Activated B cell treated with CpG ODN at 0.5 μM for 24 hours (primary cell): ENCODE measurements at regions of chr1 and their contacts with region 1.

Region 1: GRCh38 chr1:12658531-12659453 is 14.9 kb downstream of the AADACL4 start:
- DNase-seq: peak; percentile 26
- ATAC-seq: peak; percentile 52
- H3K4me3 Mint-ChIP-seq: no peak overlapping the region
- H3K27ac Mint-ChIP-seq: no peak overlapping the region
- H3K4me1 Mint-ChIP-seq: peaks cover 6% of the 10 kb centered on the region
- H3K27me3 Mint-ChIP-seq: peaks cover 20% of the 10 kb centered on the region
- CTCF ChIP-seq: no peak

Region 2: GRCh38 chr1:12314333-12314903 is 344.4 kb before region 1 on chr1:
- CTCF ChIA-PET with region 1: interaction called, 20 read pairs
- POLR2A ChIA-PET with region 1: no interaction called
- intact Hi-C with region 1: loop called (anchors 1 kb)
- DNase-seq: no peak
- ATAC-seq: no peak
- H3K4me3 Mint-ChIP-seq: no peak overlapping the region
- H3K27ac Mint-ChIP-seq: no peak overlapping the region
- H3K4me1 Mint-ChIP-seq: no peaks in the 10 kb centered on the region
- H3K27me3 Mint-ChIP-seq: no peaks in the 10 kb centered on the region
- CTCF ChIP-seq: no peak

Region 3: GRCh38 chr1:12596007-12596821 is 62.6 kb before region 1 on chr1:
- CTCF ChIA-PET with region 1: no interaction called
- POLR2A ChIA-PET with region 1: no interaction called
- intact Hi-C with region 1: no loop called
- DNase-seq: no peak
- ATAC-seq: peak; percentile 25
- H3K4me3 Mint-ChIP-seq: peak overlapping the region; percentile 49
- H3K27ac Mint-ChIP-seq: no peak overlapping the region
- H3K4me1 Mint-ChIP-seq: peaks cover 13% of the 10 kb centered on the region
- H3K27me3 Mint-ChIP-seq: peaks cover 21% of the 10 kb centered on the region
- CTCF ChIP-seq: no peak

Region 4: DNA sequence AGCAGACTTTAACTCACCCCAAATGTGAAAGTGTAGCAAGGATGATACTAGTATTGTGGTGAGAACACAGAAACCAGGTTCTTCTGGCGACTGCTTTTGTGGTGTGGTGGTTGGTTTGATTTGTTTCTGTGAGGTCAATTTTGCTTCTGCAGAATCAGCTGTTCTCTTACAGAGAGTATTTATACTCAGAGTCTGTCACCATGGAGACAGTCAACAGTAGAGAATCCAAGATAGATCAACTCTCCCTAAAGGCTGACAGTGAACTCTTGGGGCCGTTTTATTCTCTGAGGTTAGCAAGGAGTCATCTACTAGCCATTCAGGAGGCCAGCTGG is 87.2 kb after region 1 on chr1 and contains the start of gene CFAP107:
- CTCF ChIA-PET with region 1: no interaction called
- POLR2A ChIA-PET with region 1: no interaction called
- intact Hi-C with region 1: no loop called
- DNase-seq: no peak
- ATAC-seq: no peak
- H3K4me3 Mint-ChIP-seq: no peak within 1 kb of the TSS
- H3K27ac Mint-ChIP-seq: no peak within 1 kb of the TSS
- H3K4me1 Mint-ChIP-seq: no peaks in the 10 kb centered on the region
- H3K27me3 Mint-ChIP-seq: peaks cover 18% of the 10 kb centered on the region
- CTCF ChIP-seq: no peak
- total RNA-seq, gene CFAP107: not detected in 2 replicates